ENCODE measurements at regions of chr17 and their contacts with region 1.

Region 1: GRCh38 chr17:7851438-7852256 is 3.2 kb upstream of the TMEM88 start:
- DNase-seq: peak; percentile 98
- H3K4me3 Mint-ChIP-seq: peak overlapping the region; percentile 72
- H3K27ac Mint-ChIP-seq: peak overlapping the region; percentile 56
- H3K4me1 Mint-ChIP-seq: peaks cover 29% of the 10 kb centered on the region
- H3K27me3 Mint-ChIP-seq: no peaks in the 10 kb centered on the region

Region 2: GRCh38 chr17:7403977-7404736 is 447.5 kb before region 1 on chr17 and contains the start of gene TMEM256:
- intact Hi-C with region 1: no loop called
- DNase-seq: peak; percentile 98
- H3K4me3 Mint-ChIP-seq: peak within 1 kb of the TSS; percentile 96
- H3K27ac Mint-ChIP-seq: peak within 1 kb of the TSS; percentile 96
- H3K4me1 Mint-ChIP-seq: peaks cover 21% of the 10 kb centered on the region
- H3K27me3 Mint-ChIP-seq: peaks cover 23% of the 10 kb centered on the region
- total RNA-seq, gene TMEM256: 47.4 and 59.3 TPM in 2 replicates

Region 3: GRCh38 chr17:7823581-7824397 is 27.9 kb before region 1 on chr17:
- intact Hi-C with region 1: loop called (anchors 1 kb)
- DNase-seq: no peak
- H3K4me3 Mint-ChIP-seq: no peak overlapping the region
- H3K27ac Mint-ChIP-seq: peak overlapping the region; percentile 12
- H3K4me1 Mint-ChIP-seq: peaks cover 7% of the 10 kb centered on the region
- H3K27me3 Mint-ChIP-seq: peaks cover 20% of the 10 kb centered on the region

Region 4: GRCh38 chr17:7834962-7835813 is 16.5 kb before region 1 on chr17:
- intact Hi-C with region 1: loop called (anchors 1 kb)
- DNase-seq: peak; percentile 94
- H3K4me3 Mint-ChIP-seq: peak overlapping the region; percentile 87
- H3K27ac Mint-ChIP-seq: peak overlapping the region; percentile 95
- H3K4me1 Mint-ChIP-seq: peaks cover 50% of the 10 kb centered on the region
- H3K27me3 Mint-ChIP-seq: peaks cover 17% of the 10 kb centered on the region